ENCODE measurements at regions of chr12 and their contacts with region 1.

Region 1: GRCh38 chr12:48197971-48198671 is 5.0 kb downstream of the OR10AD1 start:
- DNase-seq: peak; percentile 95 to 99
- H3K4me3 ChIP-seq: peak overlapping the region; percentile 70 to 93
- H3K27ac ChIP-seq: peak overlapping the region; percentile 97 to 99
- H3K4me1 ChIP-seq: peaks cover 0 to 2% of the 10 kb centered on the region in 2 donors
- H3K27me3 ChIP-seq: no peaks in the 10 kb centered on the region
- CTCF ChIP-seq: no peak

Region 2: DNA sequence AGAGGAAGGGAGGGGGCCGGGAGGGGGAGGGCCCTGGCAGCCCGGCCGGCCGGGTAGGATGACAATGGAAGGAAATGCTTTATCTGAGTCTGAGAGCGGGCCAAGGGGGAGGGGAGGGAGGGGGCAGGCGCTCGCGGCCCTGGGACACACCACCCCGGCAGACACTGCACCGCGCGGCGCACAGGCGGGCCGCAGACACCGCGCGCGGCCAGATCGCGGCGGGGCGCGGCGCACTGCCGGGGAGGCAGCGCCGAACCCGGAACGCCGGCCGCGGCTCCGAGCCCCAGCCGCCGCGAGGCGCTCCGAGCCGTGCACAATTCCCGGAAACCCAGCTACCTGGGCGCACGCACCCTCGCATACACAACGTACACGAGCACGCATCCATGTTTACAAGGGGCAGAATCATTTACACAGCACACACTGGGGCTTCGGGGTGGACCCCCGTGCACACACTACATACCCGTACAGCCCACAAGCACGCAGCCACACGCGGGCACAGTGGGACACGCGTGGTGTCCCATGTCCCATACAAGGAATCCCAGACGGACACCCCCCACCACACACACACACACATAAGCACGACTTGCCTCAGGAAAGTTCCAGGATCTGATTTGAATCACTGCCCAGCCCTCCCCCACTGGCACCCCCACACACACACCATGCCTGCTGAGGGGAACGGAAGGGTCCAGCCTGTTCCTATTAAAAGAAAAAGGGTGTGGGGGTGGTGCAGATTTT is 378.1 kb before region 1 on chr12 and contains the start of gene HDAC7:
- intact Hi-C with region 1: loop called (anchors 5 kb)
- DNase-seq: peak in 1 of 2 donors; percentile 91
- H3K4me3 ChIP-seq: peak within 1 kb of the TSS; percentile 88 to 89
- H3K27ac ChIP-seq: peak within 1 kb of the TSS; percentile 97
- H3K4me1 ChIP-seq: peaks cover 34 to 66% of the 10 kb centered on the region in 2 donors
- H3K27me3 ChIP-seq: no peaks in the 10 kb centered on the region
- CTCF ChIP-seq: peak in 1 of 3 experiments; percentile 22
- total RNA-seq, gene HDAC7: 202 TPM

Region 3: DNA sequence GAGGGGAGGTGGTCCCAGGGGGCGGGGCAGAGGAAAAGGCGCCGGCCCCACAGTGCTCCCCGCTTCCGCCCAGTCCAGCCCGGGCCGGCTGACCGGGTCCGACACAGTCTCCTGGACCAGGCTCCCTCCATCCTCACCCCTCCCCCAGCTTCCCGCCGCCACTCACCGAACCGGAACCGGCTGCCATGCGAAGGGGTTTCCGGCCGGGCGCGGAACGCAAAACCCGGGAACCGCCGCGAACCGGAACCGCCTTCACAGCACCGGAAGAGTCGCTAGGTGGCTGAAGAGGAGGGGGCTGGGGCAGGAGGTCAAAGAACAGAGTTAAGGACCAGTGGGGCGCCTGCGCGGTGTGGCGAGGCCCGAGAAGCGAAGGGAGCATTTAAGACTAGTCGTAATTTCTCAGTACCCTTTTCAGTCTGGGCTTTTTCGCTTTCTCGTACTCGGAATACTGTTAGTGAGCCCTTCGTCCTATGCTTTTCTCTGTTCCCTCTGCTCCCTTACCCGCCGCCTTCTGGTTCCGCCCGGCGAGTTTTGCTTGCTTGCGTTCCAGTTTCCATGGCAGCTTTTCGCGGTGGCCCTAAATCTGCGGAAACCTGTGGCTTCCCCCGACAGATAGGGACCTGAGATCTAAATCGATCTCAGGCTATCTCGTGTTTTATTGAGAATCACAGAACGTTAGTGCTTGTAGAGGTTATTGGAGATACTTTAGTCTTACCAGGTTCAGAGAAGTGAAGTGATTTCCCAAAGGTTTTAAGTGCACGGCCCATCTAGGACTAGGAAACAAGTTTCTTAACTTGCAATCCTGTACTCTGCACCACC is 92.0 kb before region 1 on chr12 and contains the start of gene SENP1:
- intact Hi-C with region 1: loop called (anchors 5 kb)
- DNase-seq: peak; percentile 31 to 92
- H3K4me3 ChIP-seq: peak within 1 kb of the TSS; percentile 83 to 93
- H3K27ac ChIP-seq: peak within 1 kb of the TSS; percentile 78 to 96
- H3K4me1 ChIP-seq: peaks cover 4 to 12% of the 10 kb centered on the region in 2 donors
- H3K27me3 ChIP-seq: no peaks in the 10 kb centered on the region
- CTCF ChIP-seq: peak in 1 of 3 experiments; percentile 20
- total RNA-seq, gene SENP1: 11.3 TPM

Region 4: DNA sequence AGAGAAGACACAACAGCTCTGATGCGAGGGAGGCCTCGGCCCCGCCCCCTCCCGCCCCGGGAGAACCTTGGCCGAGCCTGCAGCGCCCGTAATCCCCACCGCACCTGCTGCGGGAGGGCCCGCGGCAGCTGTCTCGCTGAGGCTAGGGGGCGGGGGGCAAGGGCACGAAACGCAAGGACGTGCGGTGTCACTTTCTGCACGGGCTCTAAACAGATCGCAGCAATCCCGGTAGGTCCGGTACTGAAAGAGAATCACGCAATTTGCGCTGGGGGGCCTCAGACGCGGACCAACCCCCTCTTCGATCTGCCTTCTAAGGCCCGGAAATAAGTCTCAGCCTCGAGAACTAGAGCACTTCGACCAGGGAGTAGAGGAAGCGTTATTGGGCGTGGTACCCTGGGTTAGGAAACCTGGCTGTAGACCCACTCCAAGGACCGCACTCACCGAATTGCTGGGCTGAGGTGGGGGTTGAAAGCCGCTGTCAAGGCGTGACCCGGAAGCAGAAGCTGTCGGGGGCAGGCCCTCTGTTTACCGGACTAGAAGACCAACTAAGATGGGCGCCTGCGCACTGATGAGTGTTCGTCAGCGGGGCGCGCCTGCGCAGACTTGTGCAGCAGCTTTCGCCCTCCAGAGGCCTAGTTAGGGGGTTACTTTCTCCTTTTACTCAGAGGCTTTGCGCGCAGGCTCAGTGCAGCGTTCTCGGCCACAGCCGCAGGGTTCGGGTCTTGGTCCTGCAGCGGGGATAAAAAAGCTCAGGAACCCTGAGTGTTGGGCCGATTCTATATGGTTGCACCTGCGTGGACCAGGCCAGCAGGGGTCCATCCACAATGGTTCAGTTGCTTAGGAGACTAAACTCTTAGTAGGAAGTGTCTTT is 40.9 kb before region 1 on chr12 and contains the start of gene ASB8:
- intact Hi-C with region 1: loop called (anchors 2 kb)
- DNase-seq: peak; percentile 94 to 100
- H3K4me3 ChIP-seq: peak within 1 kb of the TSS; percentile 75 to 88
- H3K27ac ChIP-seq: peak within 1 kb of the TSS; percentile 76 to 78
- H3K4me1 ChIP-seq: peaks cover 0 to 8% of the 10 kb centered on the region in 2 donors
- H3K27me3 ChIP-seq: no peaks in the 10 kb centered on the region
- CTCF ChIP-seq: peak; percentile 57 to 63 (median 60)
- total RNA-seq, gene ASB8: 23.7 TPM

Region 5: DNA sequence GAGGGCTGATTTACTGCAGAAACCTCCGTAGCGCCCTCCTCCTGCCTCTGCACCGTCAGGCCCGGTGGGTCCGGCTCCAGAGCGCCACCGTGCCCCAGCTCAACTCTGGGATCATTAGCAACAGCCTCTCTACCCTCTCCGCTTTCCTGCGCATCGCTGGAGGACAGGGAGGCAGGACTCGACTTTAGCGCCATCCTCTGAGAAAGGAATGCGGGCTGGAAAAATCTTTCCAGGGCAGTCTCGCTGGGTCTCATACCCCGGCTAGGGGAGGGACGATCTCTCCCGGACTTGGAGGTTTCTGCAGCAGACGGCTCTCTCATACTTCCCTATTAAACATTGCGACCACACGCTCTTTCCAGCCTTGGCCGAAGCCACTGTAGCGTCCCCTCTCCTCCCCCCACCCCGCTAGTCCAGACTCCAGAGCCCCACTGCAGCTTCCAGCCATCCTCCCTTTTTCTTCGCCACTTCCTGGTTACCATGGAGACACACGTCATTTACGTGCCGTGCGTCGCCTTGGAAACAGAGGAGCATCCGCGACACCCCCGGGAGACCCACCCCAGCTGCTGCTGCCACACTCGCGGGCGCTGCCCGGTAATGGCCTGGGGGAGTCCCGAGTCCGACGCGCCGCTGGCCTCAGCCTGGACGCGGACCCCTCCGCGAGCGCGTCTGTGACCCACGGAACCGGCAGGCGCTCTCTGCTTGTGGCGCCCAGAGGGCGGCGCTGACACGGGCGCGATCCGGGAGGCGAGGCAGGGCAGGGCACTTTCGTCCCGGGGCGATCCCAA is 14.8 kb before region 1 on chr12 and contains the start of gene CCDC184:
- intact Hi-C with region 1: loop called (anchors 1 kb)
- DNase-seq: peak in 1 of 2 donors; percentile 87
- H3K4me3 ChIP-seq: peak within 1 kb of the TSS; percentile 74 to 89
- H3K27ac ChIP-seq: peak within 1 kb of the TSS; percentile 55 to 70
- H3K4me1 ChIP-seq: peaks cover 4 to 8% of the 10 kb centered on the region in 2 donors
- H3K27me3 ChIP-seq: no peaks in the 10 kb centered on the region
- CTCF ChIP-seq: peak; percentile 41 to 58 (median 47)
- total RNA-seq, gene CCDC184: 1.6 TPM

Region 6: DNA sequence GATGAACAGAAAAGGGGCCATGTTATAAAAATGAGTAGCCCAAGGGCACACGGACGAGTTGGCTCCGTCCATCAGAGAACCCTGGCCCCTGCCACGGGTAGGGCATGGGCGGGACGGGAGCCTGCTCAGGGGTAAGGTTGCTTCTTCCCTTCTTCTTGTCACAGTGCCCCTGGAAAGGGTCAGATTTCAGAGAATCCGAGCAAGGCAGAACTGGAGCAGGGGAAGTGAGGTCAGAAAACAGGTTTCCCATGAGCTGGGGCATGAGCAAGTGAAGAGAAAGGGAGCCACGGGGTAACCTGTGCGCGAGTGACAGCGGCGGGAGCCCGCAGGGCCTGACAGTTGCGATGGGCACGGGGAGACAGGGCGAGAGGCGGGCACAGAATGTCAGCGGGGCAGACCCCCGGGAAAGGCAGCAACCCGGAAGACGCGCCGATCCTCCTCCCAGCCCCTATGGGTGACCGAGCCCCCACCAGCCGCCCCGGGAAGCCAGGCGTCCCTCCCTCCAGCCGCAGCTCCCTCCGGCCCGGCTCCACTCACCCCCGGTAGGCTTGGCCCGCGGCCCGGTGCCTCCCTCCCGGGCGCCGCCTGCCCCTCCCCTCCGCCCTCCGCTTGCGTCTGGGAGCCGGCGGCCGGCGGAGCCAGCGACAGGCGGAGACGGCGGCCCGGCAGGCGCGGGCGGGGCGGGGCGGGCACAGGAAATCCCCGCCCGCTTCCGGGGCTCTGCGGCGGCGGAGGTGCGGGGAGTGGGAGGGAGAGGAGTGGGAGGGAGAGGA is 152.3 kb after region 1 on chr12 and contains the start of gene ZNF641:
- intact Hi-C with region 1: loop called (anchors 1 kb)
- DNase-seq: peak; percentile 46 to 91
- H3K4me3 ChIP-seq: peak within 1 kb of the TSS; percentile 80 to 87
- H3K27ac ChIP-seq: peak within 1 kb of the TSS; percentile 91 to 98
- H3K4me1 ChIP-seq: peaks cover 0 to 5% of the 10 kb centered on the region in 2 donors
- H3K27me3 ChIP-seq: no peaks in the 10 kb centered on the region
- CTCF ChIP-seq: no peak
- total RNA-seq, gene ZNF641: 10.9 TPM

Region 7: DNA sequence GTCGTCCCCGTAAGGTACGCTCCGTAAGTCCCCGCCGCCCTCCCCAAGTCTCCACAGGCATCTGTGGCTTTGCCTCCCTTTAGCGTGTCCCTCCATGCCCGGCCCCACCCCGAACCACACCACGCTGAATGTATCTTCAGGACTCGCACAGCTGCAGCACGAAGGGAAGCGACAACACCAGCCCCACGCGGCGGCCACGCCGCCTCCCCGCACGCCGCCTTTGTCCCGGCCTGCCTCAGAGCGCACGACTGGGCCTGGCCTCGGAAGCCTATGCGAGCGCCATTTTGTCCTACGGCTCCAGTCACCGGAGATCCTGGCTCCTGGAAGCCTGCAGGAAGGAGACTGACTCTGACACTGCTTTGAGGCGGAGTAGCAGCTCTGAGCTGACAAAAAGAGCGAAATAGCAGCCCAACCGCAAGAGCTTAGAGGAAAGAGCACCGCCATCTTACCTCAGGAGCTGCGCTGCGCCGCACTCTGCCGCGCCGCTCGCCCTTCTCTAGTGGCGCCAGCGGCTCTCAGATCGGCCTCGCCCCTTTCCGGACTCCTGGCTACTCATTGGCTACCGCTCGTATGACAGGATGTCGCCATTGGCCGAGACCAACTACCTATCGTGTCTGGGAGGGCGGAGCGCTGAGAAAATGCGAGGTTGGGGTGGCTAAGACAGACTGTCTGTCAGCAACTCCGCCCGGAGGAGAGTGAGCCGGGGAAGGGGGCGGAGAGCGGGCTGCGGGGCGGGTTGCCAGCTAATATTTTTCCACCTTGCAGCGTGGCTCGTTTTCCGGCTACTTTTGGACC is 483.8 kb after region 1 on chr12 and contains the start of gene KANSL2:
- intact Hi-C with region 1: loop called (anchors 2 kb)
- DNase-seq: peak; percentile 99
- H3K4me3 ChIP-seq: peak within 1 kb of the TSS; percentile 75 to 95
- H3K27ac ChIP-seq: peak within 1 kb of the TSS; percentile 87 to 94
- H3K4me1 ChIP-seq: peaks cover 20 to 32% of the 10 kb centered on the region in 2 donors
- H3K27me3 ChIP-seq: no peaks in the 10 kb centered on the region
- CTCF ChIP-seq: no peak
- total RNA-seq, gene KANSL2: 30.1 TPM